T-cell (primary cell): ENCODE measurements at regions of chr6 and their contacts with region 1.

Region 1: DNA sequence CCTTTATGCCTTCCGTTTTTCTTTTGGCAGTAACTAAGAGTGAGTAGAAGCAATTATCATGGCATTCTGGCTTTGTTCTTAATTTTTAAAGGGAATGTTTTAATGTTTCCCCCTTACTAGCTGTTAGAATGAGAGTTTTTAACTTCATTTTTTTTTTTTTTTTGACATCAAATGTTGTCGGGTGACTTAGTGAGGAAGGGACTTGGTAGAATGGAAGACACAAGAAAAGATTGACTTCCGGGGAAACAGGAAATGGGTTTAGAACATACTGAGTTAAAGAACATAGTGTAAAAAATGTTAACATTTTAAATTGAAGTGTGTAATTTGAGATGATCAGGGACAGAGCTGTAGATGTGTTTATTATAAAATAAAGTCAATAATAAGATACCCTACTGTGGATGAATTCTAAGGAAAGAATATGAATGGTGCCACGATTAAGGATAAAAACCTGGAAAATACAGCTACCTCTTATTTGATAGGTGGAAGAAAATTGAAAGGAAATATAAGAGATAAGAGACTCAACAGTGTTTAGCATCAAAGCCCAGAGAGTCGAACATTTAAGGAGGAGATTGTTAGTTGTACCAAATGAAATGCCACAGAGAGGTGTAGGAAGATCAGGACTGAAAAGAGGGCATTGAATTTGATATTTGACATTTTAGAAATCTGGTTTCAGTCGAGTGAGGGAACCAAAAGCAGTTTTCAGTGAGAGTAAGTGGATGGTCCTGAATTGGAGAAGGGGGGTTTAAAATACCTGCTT is 9.4 kb downstream of the HSF2 start:
- DNase-seq: peak in 2 of 35 experiments; percentile 1 to 61
- ATAC-seq: peak; percentile 87 to 94 (median 90)
- H3K4me3 ChIP-seq: peak overlapping the region; percentile 5 to 47
- H3K4me3 Mint-ChIP-seq: peak overlapping the region; percentile 67 to 81 (median 68)
- H3K27ac ChIP-seq: peak overlapping the region; percentile 73
- H3K27ac Mint-ChIP-seq: peak overlapping the region; percentile 91 to 96
- H3K4me1 ChIP-seq: peaks cover 3 to 53% of the 10 kb centered on the region in 2 experiments
- H3K4me1 Mint-ChIP-seq: peaks cover 75 to 79% (median 79%) of the 10 kb centered on the region in 3 donors
- H3K27me3 ChIP-seq: no peaks in the 10 kb centered on the region
- H3K27me3 Mint-ChIP-seq: no peaks in the 10 kb centered on the region

Region 2: GRCh38 chr6:121748376-121748775 is 660.5 kb before region 1 on chr6:
- CTCF ChIA-PET with region 1: no interaction called
- POLR2A ChIA-PET with region 1: no interaction called
- DNase-seq: no peak
- ATAC-seq: no peak
- H3K4me3 ChIP-seq: no peak overlapping the region
- H3K4me3 Mint-ChIP-seq: no peak overlapping the region
- H3K27ac ChIP-seq: no peak overlapping the region
- H3K27ac Mint-ChIP-seq: no peak overlapping the region
- H3K4me1 ChIP-seq: no peaks in the 10 kb centered on the region
- H3K4me1 Mint-ChIP-seq: no peaks in the 10 kb centered on the region
- H3K27me3 ChIP-seq: no peaks in the 10 kb centered on the region
- H3K27me3 Mint-ChIP-seq: no peaks in the 10 kb centered on the region

Region 3: DNA sequence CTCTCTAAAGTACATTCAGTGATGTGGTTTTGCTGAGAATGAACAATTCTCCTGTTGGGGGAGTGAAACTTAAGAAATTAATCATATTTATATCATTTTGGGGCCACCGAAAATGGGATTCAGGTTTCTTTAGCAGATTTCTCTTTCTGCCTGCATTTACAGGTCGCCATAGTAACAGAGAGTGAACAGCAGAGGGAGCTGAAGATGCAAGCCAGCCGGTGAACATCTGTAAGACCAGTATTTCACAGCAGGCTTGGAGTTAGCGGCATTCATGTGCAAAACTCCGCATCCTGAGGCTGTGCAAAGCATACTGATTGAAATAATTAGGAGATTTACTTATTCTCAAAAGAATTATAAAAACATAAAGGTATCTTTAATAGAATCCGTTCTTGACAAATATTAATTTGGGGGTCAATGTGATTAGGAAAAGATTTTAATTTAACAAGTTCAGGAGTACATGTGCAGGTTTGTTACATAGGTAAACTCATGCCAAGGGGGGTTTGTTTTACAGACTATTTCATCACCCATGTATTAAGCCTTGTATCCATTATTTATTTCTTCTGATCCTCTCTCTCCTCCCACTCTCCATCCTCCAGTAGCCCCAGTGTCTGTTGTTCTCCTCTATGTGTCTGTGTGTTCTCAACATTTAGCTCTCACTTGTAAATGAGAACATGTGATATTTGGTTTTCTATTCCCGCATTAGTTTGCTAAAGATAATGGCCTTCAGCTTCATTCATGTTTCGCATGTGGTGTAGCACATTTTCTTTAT is 27.2 kb before region 1 on chr6:
- CTCF ChIA-PET with region 1: interaction called, 3 to 10 read pairs
- POLR2A ChIA-PET with region 1: no interaction called
- DNase-seq: peak in 34 of 35 experiments; percentile 27 to 83 (median 54)
- ATAC-seq: peak; percentile 87 to 99 (median 92)
- H3K4me3 ChIP-seq: no peak overlapping the region
- H3K4me3 Mint-ChIP-seq: no peak overlapping the region
- H3K27ac ChIP-seq: no peak overlapping the region
- H3K27ac Mint-ChIP-seq: no peak overlapping the region
- H3K4me1 ChIP-seq: peaks cover 0 to 2% of the 10 kb centered on the region in 2 experiments
- H3K4me1 Mint-ChIP-seq: peaks cover 4 to 10% (median 7%) of the 10 kb centered on the region in 3 donors
- H3K27me3 ChIP-seq: no peaks in the 10 kb centered on the region
- H3K27me3 Mint-ChIP-seq: peaks cover 10 to 14% of the 10 kb centered on the region in 2 donors

Region 4: DNA sequence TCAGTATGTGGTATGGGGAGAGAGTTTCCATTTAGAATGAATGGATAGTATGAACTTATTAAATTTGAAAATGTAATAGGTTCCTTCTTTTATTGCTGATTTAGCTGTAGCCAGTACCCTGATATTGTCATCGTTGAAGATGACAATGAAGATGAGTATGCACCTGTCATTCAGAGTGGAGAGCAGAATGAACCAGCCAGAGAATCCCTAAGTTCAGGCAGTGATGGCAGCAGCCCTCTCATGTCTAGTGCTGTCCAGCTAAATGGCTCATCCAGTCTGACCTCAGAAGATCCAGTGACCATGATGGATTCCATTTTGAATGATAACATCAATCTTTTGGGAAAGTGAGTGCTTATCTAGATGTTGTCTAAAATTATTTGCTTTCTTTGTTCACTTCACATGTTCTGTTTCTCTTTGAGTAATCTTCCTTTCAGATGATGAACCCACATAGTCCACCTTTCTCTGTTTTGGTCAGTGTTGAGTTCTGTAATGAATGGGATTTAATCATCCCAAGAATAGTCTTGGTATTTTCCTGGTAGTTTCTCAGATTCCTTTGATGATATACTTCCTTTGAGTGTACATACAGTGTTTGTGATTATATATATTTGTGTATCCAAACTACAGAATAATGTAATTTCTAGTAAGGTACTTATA is 13.9 kb after region 1 on chr6:
- CTCF ChIA-PET with region 1: interaction called in 1 of 2 experiments, 4 read pairs
- POLR2A ChIA-PET with region 1: interaction called in 1 of 2 experiments, 10 read pairs
- DNase-seq: no peak
- ATAC-seq: no peak
- H3K4me3 ChIP-seq: no peak overlapping the region
- H3K4me3 Mint-ChIP-seq: no peak overlapping the region
- H3K27ac ChIP-seq: no peak overlapping the region
- H3K27ac Mint-ChIP-seq: no peak overlapping the region
- H3K4me1 ChIP-seq: no peaks in the 10 kb centered on the region
- H3K4me1 Mint-ChIP-seq: peaks cover 2 to 12% (median 3%) of the 10 kb centered on the region in 3 donors
- H3K27me3 ChIP-seq: no peaks in the 10 kb centered on the region
- H3K27me3 Mint-ChIP-seq: no peaks in the 10 kb centered on the region

Region 5: DNA sequence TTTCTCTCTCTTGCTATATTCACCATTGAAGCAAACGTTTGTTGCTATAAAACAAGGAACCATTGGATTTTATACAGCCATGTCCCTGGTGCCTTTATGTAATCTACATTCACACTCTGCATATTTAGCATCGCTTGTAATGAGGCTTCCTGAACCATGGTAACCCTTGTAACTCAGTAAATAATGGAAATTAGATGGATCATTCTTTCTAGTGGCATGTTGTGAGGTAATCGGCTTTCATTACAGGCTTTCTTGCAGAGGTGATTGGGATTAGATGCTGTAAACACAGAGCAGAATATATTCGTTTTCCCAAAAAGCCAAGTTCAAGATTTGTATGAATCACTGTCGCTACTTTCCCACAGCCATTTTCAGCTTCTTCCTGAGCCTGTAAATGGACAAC is 416.3 kb after region 1 on chr6:
- CTCF ChIA-PET with region 1: no interaction called
- POLR2A ChIA-PET with region 1: no interaction called
- DNase-seq: no peak
- ATAC-seq: no peak
- H3K4me3 ChIP-seq: no peak overlapping the region
- H3K4me3 Mint-ChIP-seq: no peak overlapping the region
- H3K27ac ChIP-seq: no peak overlapping the region
- H3K27ac Mint-ChIP-seq: no peak overlapping the region
- H3K4me1 ChIP-seq: no peaks in the 10 kb centered on the region
- H3K4me1 Mint-ChIP-seq: no peaks in the 10 kb centered on the region
- H3K27me3 ChIP-seq: peaks cover 0 to 2% of the 10 kb centered on the region in 2 experiments
- H3K27me3 Mint-ChIP-seq: peaks cover 0 to 7% of the 10 kb centered on the region in 2 donors